SK-N-SH (cell line): ENCODE measurements at regions of chr3 and their contacts with region 1.

Region 1: GRCh38 chr3:183697610-183698317 is at the start of gene YEATS2:
- DNase-seq: peak; percentile 99
- H3K4me3 ChIP-seq: peak within 1 kb of the TSS; percentile 80 to 85
- H3K27ac ChIP-seq: peak within 1 kb of the TSS; percentile 78 to 84
- H3K4me1 ChIP-seq: peaks cover 0 to 7% of the 10 kb centered on the region in 2 experiments; a peak in 2 of 4 replicates
- H3K27me3 ChIP-seq: no peaks in the 10 kb centered on the region
- CTCF ChIP-seq: no peak
- EP300 ChIP-seq: no peak
- RAD21 ChIP-seq: no peak
- polyA plus RNA-seq, gene YEATS2: 19.9 and 23.8 TPM in 2 replicates

Region 2: GRCh38 chr3:183635431-183636220 is 62.1 kb before region 1 on chr3 and contains the start of gene KLHL24:
- CTCF ChIA-PET with region 1: interaction called, 3 read pairs
- POLR2A ChIA-PET with region 1: interaction called, 20 read pairs
- DNase-seq: peak; percentile 92
- H3K4me3 ChIP-seq: peak within 1 kb of the TSS; percentile 78 to 96
- H3K27ac ChIP-seq: peak within 1 kb of the TSS; percentile 76 to 83
- H3K4me1 ChIP-seq: no peaks in the 10 kb centered on the region; a peak in 2 of 4 replicates
- H3K27me3 ChIP-seq: no peaks in the 10 kb centered on the region
- CTCF ChIP-seq: no peak; the same call in 1 of the 2 replicates
- EP300 ChIP-seq: no peak
- RAD21 ChIP-seq: 0 out of 2 replicates have a peak, but pooled peaks have one; percentile 11
- polyA plus RNA-seq, gene KLHL24: 5.7 and 8.0 TPM in 2 replicates

Region 3: DNA sequence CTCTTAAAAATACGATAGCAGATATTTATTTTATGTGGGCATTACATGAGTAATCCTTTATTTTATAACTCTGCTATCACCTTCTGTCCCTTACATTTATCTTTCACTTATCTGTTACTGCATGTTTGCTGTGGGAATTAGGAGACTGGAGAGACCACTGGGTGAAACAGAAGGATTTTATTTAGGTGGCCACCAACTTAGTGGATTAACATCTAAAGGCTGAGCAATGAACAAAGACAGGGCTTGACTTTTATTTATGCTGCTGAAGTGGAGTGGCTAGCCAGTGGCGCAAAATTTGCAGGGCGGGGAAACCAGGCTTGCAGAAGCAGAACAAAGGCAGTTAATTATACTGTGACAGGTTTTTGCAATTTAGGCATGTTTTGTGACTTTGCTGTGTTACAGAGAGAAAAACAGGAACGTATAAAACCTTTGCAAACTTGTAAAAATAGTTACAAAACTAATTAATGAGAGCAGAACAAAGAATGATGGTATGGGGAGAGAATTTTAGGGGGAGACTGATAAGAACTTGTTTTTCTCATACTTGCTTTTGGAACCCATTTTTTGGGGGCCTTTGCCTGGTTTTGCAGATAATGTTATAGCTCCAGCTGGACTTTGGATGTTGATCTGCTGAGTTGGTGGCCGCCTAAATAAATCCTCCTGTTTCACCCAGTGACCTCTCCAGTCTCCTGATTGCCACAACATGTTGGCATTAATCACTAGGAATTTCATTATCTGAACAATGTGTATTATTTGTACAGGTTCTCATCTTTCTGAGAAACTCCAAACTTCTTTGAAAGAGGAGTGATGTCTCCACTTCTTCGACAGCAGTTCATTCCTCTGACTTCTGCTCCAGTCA is 44.3 kb before region 1 on chr3:
- CTCF ChIA-PET with region 1: no interaction called
- POLR2A ChIA-PET with region 1: no interaction called
- DNase-seq: no peak
- H3K4me3 ChIP-seq: no peak overlapping the region; a peak in 1 of 4 replicates
- H3K27ac ChIP-seq: no peak overlapping the region
- H3K4me1 ChIP-seq: no peaks in the 10 kb centered on the region
- H3K27me3 ChIP-seq: no peaks in the 10 kb centered on the region
- CTCF ChIP-seq: no peak
- EP300 ChIP-seq: no peak
- RAD21 ChIP-seq: no peak